ENCODE measurements at regions of chr4 and their contacts with region 1.

Region 1: DNA sequence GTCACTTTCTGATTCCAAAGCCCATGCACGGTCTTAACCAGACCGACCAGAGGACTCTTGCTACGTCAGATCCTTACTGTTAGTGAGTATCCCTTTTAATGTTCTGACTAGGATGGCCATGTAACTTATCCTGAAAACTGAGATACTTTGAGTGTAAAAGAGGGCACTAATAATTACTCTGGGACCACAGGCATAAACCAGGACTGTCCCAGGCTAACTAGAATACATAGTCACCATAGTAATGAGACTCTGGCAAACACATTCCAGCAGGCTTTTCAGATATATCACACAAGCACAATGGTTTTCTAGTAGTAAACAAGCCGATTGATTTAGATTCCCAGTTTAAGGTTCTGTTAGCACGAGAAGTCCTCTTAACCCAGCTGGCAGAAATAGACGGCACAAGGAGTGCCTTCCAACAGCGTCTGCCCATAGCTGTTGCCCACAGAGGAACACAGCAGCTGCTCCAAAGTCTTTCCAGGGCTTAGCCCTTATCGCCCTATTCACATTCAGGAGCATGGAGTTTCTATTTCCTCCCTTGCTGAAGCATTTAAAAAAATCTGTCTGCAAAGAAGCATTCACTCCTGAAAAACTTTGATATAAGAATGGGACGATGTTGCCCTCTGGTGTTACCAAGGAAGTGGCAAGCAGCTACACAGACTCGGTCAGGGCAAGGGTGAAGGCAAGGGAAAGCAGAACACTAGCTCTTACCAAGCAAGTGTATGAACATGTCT is 92.4 kb downstream of the CXCL13 start:
- DNase-seq: peak; percentile 67
- ATAC-seq: peak; percentile 58
- H3K4me3 ChIP-seq: no peak overlapping the region
- H3K27ac ChIP-seq: no peak overlapping the region
- H3K4me1 ChIP-seq: peaks cover 5% of the 10 kb centered on the region
- H3K27me3 ChIP-seq: peaks cover 2% of the 10 kb centered on the region; the same call in 1 of the 2 replicates
- CTCF ChIP-seq: peak; percentile 51
- POLR2A ChIP-seq: no peak
- RAD21 ChIP-seq: peak; percentile 54

Region 2: GRCh38 chr4:76931087-76931486 is 766.9 kb before region 1 on chr4:
- CTCF ChIA-PET with region 1: no interaction called
- POLR2A ChIA-PET with region 1: no interaction called
- dilution Hi-C with region 1: no loop called
- in situ Hi-C with region 1: no loop called
- intact Hi-C with region 1: no loop called
- DNase-seq: no peak
- ATAC-seq: peak; percentile 46; the same call in 1 of the 2 replicates
- H3K4me3 ChIP-seq: no peak overlapping the region
- H3K27ac ChIP-seq: no peak overlapping the region
- H3K4me1 ChIP-seq: peaks cover 2% of the 10 kb centered on the region; the same call in 1 of the 2 replicates
- H3K27me3 ChIP-seq: no peaks in the 10 kb centered on the region
- CTCF ChIP-seq: no peak
- POLR2A ChIP-seq: no peak
- RAD21 ChIP-seq: no peak

Region 3: GRCh38 chr4:77600521-77601451 is 97.2 kb before region 1 on chr4:
- CTCF ChIA-PET with region 1: interaction called, 7 read pairs
- POLR2A ChIA-PET with region 1: no interaction called
- dilution Hi-C with region 1: no loop called
- in situ Hi-C with region 1: no loop called
- intact Hi-C with region 1: loop called (anchors 1 kb)
- DNase-seq: peak; percentile 29
- ATAC-seq: peak; percentile 65
- H3K4me3 ChIP-seq: no peak overlapping the region
- H3K27ac ChIP-seq: no peak overlapping the region
- H3K4me1 ChIP-seq: no peaks in the 10 kb centered on the region
- H3K27me3 ChIP-seq: peaks cover 8% of the 10 kb centered on the region
- CTCF ChIP-seq: peak; percentile 66
- POLR2A ChIP-seq: no peak
- RAD21 ChIP-seq: peak; percentile 71

Region 4: DNA sequence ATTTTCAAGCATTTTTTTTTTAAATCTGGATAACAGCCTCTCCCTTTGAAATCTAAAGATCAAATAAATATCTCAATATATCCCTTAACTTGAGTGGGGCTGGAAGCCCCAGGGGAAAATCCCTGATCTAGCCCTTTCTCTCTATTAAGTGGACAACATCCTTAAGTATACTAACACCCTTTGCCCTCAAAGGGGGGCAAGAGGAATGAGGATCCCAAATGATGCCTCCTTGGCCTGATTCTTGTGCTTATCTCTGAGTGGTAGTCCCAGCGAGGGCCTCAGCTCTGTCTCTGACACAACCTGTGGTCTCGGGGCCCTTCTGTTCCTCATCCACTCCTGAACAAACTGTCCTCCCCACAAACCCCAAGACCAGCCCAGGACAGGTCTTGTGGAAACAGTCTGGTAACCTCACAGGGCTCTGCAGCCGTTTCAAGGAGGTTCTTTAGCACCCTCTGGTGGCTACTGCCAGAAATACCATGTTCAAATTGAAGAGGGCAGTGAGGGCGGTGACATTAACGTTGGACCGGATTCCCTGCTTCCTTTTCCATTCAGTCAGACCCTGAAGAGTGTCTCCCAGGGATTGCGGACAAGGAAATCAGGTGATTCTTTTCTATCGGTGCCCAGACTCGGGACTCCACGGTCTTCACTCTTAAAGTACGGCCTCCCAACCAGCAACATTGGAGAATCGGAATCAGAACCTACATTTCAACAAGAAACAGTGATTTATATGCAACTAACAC is 79.5 kb before region 1 on chr4:
- CTCF ChIA-PET with region 1: interaction called, 4 read pairs
- POLR2A ChIA-PET with region 1: no interaction called
- dilution Hi-C with region 1: no loop called
- in situ Hi-C with region 1: no loop called
- intact Hi-C with region 1: loop called (anchors 1 kb)
- DNase-seq: peak; percentile 58
- ATAC-seq: peak; percentile 99
- H3K4me3 ChIP-seq: no peak overlapping the region
- H3K27ac ChIP-seq: no peak overlapping the region
- H3K4me1 ChIP-seq: no peaks in the 10 kb centered on the region
- H3K27me3 ChIP-seq: peaks cover 20% of the 10 kb centered on the region
- CTCF ChIP-seq: peak; percentile 69
- POLR2A ChIP-seq: no peak
- RAD21 ChIP-seq: peak; percentile 62

Region 5: GRCh38 chr4:77734928-77735327 is 36.9 kb after region 1 on chr4:
- CTCF ChIA-PET with region 1: no interaction called
- POLR2A ChIA-PET with region 1: no interaction called
- dilution Hi-C with region 1: no loop called
- in situ Hi-C with region 1: no loop called
- intact Hi-C with region 1: loop called (anchors 5 kb)
- DNase-seq: peak; percentile 79
- ATAC-seq: peak; percentile 84
- H3K4me3 ChIP-seq: no peak overlapping the region
- H3K27ac ChIP-seq: no peak overlapping the region
- H3K4me1 ChIP-seq: peaks cover 2% of the 10 kb centered on the region; the same call in 1 of the 2 replicates
- H3K27me3 ChIP-seq: no peaks in the 10 kb centered on the region
- CTCF ChIP-seq: no peak
- POLR2A ChIP-seq: no peak
- RAD21 ChIP-seq: no peak

Region 6: GRCh38 chr4:77819843-77820648 is 122.0 kb after region 1 on chr4:
- CTCF ChIA-PET with region 1: interaction called, 3 read pairs
- POLR2A ChIA-PET with region 1: no interaction called
- dilution Hi-C with region 1: no loop called
- in situ Hi-C with region 1: no loop called
- intact Hi-C with region 1: loop called (anchors 5 kb)
- DNase-seq: peak; percentile 70
- ATAC-seq: peak; percentile 83
- H3K4me3 ChIP-seq: peak overlapping the region; percentile 94
- H3K27ac ChIP-seq: peak overlapping the region; percentile 86
- H3K4me1 ChIP-seq: peaks cover 2% of the 10 kb centered on the region
- H3K27me3 ChIP-seq: no peaks in the 10 kb centered on the region
- CTCF ChIP-seq: no peak
- POLR2A ChIP-seq: peak; percentile 53; the same call in 1 of the 2 replicates
- RAD21 ChIP-seq: no peak

Region 7: GRCh38 chr4:77862478-77863216 is 164.6 kb after region 1 on chr4 and contains the start of gene MRPL1:
- CTCF ChIA-PET with region 1: no interaction called
- POLR2A ChIA-PET with region 1: no interaction called
- dilution Hi-C with region 1: no loop called
- in situ Hi-C with region 1: no loop called
- intact Hi-C with region 1: loop called (anchors 1 kb)
- DNase-seq: peak; percentile 96
- ATAC-seq: peak; percentile 98
- H3K4me3 ChIP-seq: peak within 1 kb of the TSS; percentile 66
- H3K27ac ChIP-seq: peak within 1 kb of the TSS; percentile 81
- H3K4me1 ChIP-seq: peaks cover 1% of the 10 kb centered on the region; the same call in 1 of the 2 replicates
- H3K27me3 ChIP-seq: no peaks in the 10 kb centered on the region
- CTCF ChIP-seq: no peak
- POLR2A ChIP-seq: peak; percentile 94
- RAD21 ChIP-seq: no peak
- total RNA-seq, gene MRPL1: 13.4 and 33.6 TPM in 2 replicates

Measured in IMR-90 (cell line).